AG04449 (cell line): ENCODE measurements at regions of chr3 and their contacts with region 1.

Region 1: DNA sequence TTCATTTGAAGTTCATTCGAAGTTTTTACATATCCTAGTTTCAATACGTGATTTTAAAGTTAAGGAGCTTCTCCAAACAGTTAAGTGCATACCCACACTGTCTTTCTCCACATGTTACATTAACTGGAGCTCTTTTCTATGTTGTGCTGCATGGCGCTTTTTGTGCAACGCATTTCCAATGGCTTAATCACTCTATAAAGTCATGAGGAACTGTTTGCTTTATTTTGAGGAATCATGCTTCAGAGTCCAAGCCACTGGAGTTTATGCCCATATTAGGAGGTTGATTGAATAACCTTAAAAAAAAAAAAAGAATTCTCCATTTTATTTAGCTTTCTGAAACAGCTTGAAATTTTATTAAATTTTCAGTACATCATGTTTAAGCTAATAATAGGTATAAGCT is 109.4 kb upstream of the MBNL1 start:
- DNase-seq: peak; percentile 73
- H3K4me3 ChIP-seq: no peak overlapping the region
- CTCF ChIP-seq: no peak

Region 2: DNA sequence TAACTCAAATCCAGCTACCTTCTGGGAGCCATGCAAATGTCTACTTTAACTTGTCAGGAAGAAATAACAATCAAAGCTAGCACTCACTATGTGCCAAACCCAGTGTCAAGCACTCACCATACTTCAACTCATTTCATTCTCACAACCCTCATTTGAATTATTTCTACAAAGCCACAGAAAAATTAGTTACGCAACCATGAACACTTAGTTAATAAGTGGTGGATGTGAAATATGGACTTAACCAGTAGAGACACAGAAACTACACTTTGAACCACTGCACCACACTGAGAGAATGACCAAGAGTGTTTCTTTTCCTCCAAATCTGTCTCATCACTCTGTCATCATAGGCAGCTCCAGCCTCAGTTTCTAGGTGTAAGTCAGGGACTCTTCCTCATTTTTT is 18.4 kb after region 1 on chr3:
- CTCF ChIA-PET with region 1: interaction called, 4 read pairs
- POLR2A ChIA-PET with region 1: interaction called, 10 read pairs
- DNase-seq: no peak
- H3K4me3 ChIP-seq: no peak overlapping the region
- CTCF ChIP-seq: no peak